ENCODE measurements at regions of chr3 and their contacts with region 1.

Region 1: DNA sequence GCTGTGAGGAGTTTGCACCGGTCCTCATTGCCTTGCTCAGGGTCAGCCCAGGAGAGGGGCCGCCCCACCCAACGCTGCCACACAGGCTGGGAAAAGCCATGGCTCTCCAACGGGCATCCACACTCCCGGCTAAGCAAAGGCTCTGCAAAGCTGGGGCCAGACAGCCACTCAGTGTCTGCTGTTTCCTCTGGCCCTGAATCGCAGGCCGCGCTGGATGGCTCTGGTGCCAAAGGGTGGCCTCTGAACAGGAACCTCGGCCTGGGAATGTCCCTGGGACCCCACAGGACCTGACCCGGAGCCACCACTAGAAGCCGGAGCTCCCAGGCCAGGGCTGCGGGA is 42.9 kb downstream of the RPN1 start:
- DNase-seq: no peak
- H3K4me3 ChIP-seq: peak overlapping the region; percentile 49
- H3K27ac ChIP-seq: no peak overlapping the region
- H3K4me1 ChIP-seq: no peaks in the 10 kb centered on the region
- H3K27me3 ChIP-seq: no peaks in the 10 kb centered on the region
- CTCF ChIP-seq: no peak
- EP300 ChIP-seq: no peak
- POLR2A ChIP-seq: no peak

Region 2: DNA sequence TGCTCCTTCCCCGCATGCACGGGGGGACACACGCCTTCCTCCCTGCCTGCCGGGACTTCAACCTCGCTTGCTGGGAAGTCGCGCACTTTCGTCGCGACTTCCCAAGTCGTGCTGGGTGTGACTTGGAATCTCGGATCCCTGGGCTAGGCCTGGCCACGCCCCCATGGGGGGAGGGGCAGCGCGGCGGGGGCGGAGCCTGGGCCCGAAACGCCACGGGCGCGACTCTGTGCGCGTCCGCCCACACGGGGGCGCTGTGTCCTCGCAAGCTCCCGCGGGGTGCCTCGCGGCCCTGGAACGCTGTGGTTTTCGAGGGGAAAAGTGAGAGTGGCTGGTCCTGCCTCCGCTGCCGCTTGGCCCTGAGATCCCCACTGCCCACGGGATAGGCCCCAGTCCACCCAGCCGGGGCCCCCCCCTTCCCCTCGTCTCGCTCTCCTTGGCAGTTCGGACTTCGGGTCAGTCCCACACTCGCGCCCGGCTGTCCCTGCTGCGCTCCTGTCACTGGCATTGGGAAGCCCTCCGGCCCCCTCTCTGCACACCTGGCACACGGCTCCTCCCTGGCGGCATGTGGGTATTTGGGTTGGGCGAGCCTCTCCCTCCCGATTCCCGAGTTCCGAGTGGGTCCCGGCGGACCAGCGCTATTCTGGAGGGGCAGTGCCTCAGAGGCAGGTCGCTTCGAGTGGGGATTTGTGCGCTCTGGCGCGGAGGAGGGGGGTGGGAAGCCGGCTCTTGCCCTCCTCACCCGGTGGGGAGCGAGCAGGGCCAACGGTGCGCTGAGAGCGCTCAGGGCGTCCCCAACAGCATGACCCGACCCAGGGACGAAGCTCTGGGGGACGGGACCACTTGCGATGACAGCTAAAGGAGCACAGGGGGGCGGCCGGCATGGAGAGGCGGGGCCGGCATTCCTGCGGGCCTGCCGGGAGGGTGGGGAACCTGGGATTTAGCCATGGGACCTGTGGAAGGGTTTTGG is 531.9 kb before region 1 on chr3:
- intact Hi-C with region 1: loop called (anchors 5 to 10 kb)
- DNase-seq: peak; percentile 81 to 95 (median 92)
- H3K4me3 ChIP-seq: peak overlapping the region; percentile 32
- H3K27ac ChIP-seq: no peak overlapping the region
- H3K4me1 ChIP-seq: peaks cover 6% of the 10 kb centered on the region
- H3K27me3 ChIP-seq: no peaks in the 10 kb centered on the region
- CTCF ChIP-seq: peak; percentile 90 to 99 (median 95)
- EP300 ChIP-seq: no peak
- POLR2A ChIP-seq: no peak

Region 3: DNA sequence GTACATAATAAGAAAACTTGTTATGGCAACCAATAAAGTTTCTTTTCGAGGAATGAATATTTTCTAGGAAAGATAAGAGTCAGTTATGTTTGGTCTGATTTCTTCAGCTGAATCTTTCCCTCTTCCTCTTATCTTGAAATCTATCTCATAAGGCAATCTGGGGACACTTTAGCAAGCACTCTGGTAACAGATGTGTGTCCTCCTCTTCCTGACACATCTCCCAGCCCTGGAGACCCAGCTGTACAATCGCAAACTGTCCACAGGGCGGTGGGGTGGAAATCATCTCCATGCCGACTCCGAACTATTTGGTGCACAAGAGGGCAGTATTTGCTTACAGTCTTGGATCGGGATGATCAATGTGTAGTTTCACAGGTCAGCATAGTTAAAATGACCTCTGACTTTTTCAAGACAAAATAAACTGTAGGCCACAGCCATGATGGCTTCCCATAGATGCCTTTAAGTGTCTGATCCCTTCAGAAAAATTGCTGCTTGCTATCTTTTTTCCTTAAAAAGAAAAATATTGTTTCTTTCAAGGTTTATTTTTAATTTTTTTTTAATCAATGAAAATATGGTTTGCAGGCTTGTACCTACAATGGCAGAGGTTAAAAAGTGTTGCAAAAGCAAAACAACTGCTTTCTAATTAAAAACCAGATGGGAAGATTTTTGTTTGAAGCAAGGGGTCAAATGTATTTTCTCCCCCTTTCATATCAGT is 436.7 kb before region 1 on chr3:
- intact Hi-C with region 1: loop called in 1 of 4 experiments (anchors 5 kb)
- DNase-seq: peak; percentile 58 to 73 (median 67)
- H3K4me3 ChIP-seq: no peak overlapping the region
- H3K27ac ChIP-seq: no peak overlapping the region
- H3K4me1 ChIP-seq: peaks cover 2% of the 10 kb centered on the region
- H3K27me3 ChIP-seq: no peaks in the 10 kb centered on the region
- CTCF ChIP-seq: peak; percentile 42 to 86 (median 78)
- EP300 ChIP-seq: no peak
- POLR2A ChIP-seq: no peak

Region 4: GRCh38 chr3:128254116-128254768 is 353.4 kb before region 1 on chr3:
- intact Hi-C with region 1: no loop called
- DNase-seq: no peak
- H3K4me3 ChIP-seq: no peak overlapping the region
- H3K27ac ChIP-seq: no peak overlapping the region
- H3K4me1 ChIP-seq: no peaks in the 10 kb centered on the region
- H3K27me3 ChIP-seq: no peaks in the 10 kb centered on the region
- CTCF ChIP-seq: no peak
- EP300 ChIP-seq: no peak
- POLR2A ChIP-seq: no peak

Region 5: DNA sequence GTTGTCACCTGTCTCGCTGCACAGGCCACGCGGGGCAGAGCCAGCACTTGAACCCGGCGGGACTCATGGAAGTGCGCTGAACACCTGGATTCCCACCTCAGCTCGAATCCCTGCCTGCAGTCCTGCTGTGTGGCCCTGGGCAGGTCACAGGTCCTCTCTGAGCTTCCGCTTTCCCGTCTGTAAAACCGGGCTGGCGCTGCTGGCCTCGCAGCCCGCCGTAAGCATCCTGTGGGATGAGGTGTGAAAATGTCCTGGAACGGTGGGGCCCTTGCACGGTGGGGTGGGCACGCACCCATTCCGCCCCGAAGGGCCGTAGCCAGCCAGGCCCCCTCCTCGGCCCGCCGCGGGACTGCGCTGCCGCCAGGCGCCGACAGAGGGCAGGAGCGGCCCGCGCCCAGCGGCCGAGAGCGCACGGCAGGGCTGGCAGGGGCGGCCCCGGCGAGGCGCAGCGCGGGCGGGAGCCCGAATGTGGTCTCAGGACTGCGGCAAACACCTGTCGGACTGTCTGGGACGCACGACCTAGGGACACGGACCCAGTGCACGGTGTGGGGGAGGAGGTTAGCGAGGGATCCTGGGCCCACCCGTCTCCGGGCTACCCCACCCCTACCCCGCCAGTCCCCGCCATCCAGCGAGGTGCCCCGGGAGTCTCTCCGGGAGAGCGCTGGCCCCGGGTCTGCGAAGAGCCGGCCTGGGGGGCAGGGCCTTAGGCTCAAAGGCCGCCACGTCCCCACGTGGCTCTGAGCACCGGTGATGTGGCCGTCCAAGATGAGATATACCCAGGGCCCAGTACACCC is 181.4 kb before region 1 on chr3:
- intact Hi-C with region 1: loop called (anchors 2 to 10 kb)
- DNase-seq: peak; percentile 33 to 69 (median 47)
- H3K4me3 ChIP-seq: no peak overlapping the region
- H3K27ac ChIP-seq: no peak overlapping the region
- H3K4me1 ChIP-seq: no peaks in the 10 kb centered on the region
- H3K27me3 ChIP-seq: no peaks in the 10 kb centered on the region
- CTCF ChIP-seq: peak; percentile 55 to 93 (median 90)
- EP300 ChIP-seq: no peak
- POLR2A ChIP-seq: no peak

Region 6: DNA sequence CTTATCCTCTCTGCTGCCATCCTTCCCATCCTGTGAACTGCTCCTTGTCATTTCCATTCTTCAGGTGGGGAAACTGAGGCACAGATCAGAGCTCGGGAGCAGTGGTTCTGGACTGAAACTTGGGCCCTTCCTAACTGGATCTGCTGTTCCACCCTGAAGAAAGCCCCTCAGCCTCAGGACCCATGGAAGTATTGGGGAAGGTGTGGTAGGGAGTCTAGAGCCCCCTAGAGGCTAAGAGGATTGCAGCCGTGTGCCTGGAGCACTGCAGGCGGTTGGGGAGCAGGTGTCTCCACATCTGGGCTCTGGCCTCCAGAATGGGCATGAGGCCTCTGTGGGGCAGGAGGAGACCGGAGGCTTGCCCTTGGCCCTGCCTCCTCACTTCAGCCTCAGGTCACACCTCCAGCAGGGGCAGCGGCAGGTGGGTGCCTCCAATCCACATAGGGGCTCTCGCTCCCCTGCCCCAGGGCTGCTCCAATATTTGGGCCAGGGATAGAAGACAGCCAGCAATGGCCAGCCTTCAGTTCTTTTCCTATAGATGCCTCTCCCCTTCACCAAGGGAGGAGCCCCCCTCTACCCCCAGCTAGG is 169.1 kb before region 1 on chr3:
- intact Hi-C with region 1: loop called in 1 of 4 experiments (anchors 10 kb)
- DNase-seq: no peak
- H3K4me3 ChIP-seq: no peak overlapping the region
- H3K27ac ChIP-seq: no peak overlapping the region
- H3K4me1 ChIP-seq: no peaks in the 10 kb centered on the region
- H3K27me3 ChIP-seq: no peaks in the 10 kb centered on the region
- CTCF ChIP-seq: no peak
- EP300 ChIP-seq: no peak
- POLR2A ChIP-seq: no peak

Region 7: GRCh38 chr3:130442284-130442683 is 1834.6 kb after region 1 on chr3:
- intact Hi-C with region 1: no loop called
- DNase-seq: no peak
- H3K4me3 ChIP-seq: no peak overlapping the region
- H3K27ac ChIP-seq: no peak overlapping the region
- H3K4me1 ChIP-seq: no peaks in the 10 kb centered on the region
- H3K27me3 ChIP-seq: no peaks in the 10 kb centered on the region
- CTCF ChIP-seq: no peak
- EP300 ChIP-seq: no peak
- POLR2A ChIP-seq: no peak

Measured in ovary (tissue), 10 donors.